HEK293T (cell line): ENCODE measurements at regions of chr11 and their contacts with region 1.

Region 1: GRCh38 chr11:62841361-62842184 is 2.2 kb upstream of the WDR74 start:
- DNase-seq: peak; percentile 89

Region 2: DNA sequence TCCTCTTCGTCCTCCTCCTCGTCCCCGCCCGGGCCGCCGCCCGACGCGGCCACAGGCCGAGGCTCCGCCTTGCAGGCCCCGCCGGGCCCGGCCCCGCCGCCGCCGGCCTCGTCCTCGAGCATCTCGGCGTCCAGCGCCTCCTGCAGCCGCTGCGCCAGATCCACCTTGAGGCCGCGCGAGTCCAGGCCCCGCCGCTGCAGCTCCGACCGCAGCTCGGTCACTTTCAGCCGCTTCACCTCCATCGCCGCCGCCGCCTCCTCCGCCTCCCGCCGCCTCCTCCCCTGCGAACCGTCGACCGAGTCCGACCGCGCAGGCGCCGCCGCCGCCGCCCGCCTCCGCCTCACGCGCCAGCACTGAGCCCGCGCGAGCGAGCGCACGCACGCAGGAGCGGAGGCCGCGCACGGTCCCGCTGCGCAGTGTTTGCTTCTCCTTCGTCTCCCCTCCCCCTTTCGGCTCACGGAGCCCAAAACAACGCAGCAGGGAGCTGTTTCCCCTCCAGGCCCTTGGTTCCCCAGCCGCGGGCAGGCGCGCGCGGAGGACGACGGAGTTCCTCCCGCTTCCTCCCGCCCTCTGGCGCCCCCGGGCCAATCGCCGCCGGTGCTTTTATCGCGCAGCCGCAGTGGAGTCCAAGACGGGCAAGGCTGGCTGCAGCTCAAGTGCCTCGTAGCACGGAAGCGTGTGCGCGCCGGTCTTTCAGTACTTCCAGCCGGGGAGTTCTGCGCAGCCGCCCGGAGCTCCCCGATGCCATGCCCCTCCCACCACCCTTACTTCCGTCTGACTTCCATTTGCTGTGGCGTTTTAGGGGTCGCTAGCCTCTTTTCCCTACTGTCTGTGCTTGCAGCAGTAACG is 114.4 kb before region 1 on chr11 and contains the start of gene HNRNPUL2:
- CTCF ChIA-PET with region 1: no interaction called
- POLR2A ChIA-PET with region 1: interaction called, 24 read pairs
- DNase-seq: peak; percentile 92

Region 3: GRCh38 chr11:62787005-62787759 is 54.4 kb before region 1 on chr11 and contains the start of gene TMEM179B:
- CTCF ChIA-PET with region 1: interaction called, 8 read pairs
- POLR2A ChIA-PET with region 1: interaction called, 144 read pairs
- DNase-seq: peak; percentile 91

Region 4: DNA sequence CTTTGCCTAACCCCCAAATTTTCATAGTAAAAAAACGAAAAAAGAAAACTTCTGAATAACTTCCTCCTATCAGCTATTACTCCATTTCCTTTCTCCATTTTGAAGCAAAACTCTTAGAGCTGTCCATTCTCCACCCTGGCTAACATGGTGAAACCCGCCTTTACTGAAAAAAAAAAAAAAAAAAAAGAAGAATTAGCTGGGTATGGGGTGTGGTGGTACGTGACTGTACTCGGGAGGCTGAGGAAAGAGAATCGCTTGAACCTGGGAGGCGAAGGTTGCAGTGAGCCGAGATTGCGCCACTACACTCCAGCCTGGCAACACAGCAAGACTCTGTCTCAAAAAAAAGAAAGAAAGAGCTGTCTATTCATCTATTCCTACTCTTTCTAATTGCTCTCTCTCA is 25.0 kb before region 1 on chr11:
- CTCF ChIA-PET with region 1: no interaction called
- POLR2A ChIA-PET with region 1: interaction called, 10 read pairs
- DNase-seq: no peak

Region 5: DNA sequence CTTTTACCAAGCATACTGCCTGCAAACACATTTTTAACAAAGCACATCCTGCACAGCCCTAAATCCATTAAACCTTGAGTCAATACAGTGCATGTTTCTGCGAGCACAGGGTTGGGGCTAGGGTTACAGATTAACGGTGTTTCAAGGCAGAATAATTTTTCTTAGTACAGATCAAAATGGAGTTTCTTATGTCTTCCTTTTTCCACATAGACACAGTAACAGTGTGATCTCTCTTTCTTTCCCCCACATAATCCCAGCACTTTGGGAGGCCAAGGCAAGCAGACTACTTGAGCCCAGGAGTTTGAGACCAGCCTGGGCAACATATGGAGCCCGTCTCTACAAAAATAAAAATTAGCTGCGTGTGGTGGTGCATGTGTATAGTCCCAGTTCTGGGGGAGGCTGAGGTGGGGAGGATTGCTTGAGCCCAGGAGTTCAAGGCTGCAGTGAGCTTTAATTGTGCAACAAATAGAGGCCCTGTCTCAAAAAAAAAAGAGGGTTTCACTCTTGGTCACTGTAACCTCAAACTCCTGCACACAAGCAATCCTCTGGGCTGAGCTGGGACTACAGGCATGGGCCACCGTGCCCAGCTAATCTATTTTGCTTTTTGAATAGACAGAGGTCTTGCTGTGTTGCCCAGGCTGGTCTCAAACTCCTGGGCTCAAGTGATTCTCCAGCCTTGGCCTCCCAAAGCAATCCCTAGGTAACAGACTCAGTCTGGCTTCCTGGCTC is 19.4 kb after region 1 on chr11:
- CTCF ChIA-PET with region 1: no interaction called
- POLR2A ChIA-PET with region 1: interaction called, 331 read pairs
- DNase-seq: no peak

Region 6: GRCh38 chr11:62889484-62890437 is 48.2 kb after region 1 on chr11:
- CTCF ChIA-PET with region 1: interaction called, 3 read pairs
- POLR2A ChIA-PET with region 1: interaction called, 110 read pairs
- DNase-seq: peak; percentile 42